ENCODE measurements at regions of chr13 and their contacts with region 1.

Region 1: GRCh38 chr13:39616087-39616694 is 13.2 kb upstream of the LHFPL6 start:
- DNase-seq: peak; percentile 59 to 70
- H3K4me3 ChIP-seq: no peak overlapping the region
- H3K4me3 Mint-ChIP-seq: no peak overlapping the region
- H3K27ac Mint-ChIP-seq: no peak overlapping the region
- H3K4me1 ChIP-seq: no peaks in the 10 kb centered on the region
- H3K4me1 Mint-ChIP-seq: no peaks in the 10 kb centered on the region
- H3K27me3 ChIP-seq: no peaks in the 10 kb centered on the region
- H3K27me3 Mint-ChIP-seq: peaks cover 3% of the 10 kb centered on the region
- CTCF ChIP-seq: peak; percentile 94

Region 2: GRCh38 chr13:39051157-39051556 is 565.0 kb before region 1 on chr13:
- CTCF ChIA-PET with region 1: interaction called, 6 read pairs
- POLR2A ChIA-PET with region 1: no interaction called
- intact Hi-C with region 1: loop called (anchors 5 kb)
- DNase-seq: no peak
- H3K4me3 ChIP-seq: no peak overlapping the region
- H3K4me3 Mint-ChIP-seq: no peak overlapping the region
- H3K27ac Mint-ChIP-seq: no peak overlapping the region
- H3K4me1 ChIP-seq: no peaks in the 10 kb centered on the region
- H3K4me1 Mint-ChIP-seq: no peaks in the 10 kb centered on the region
- H3K27me3 ChIP-seq: no peaks in the 10 kb centered on the region
- H3K27me3 Mint-ChIP-seq: no peaks in the 10 kb centered on the region
- CTCF ChIP-seq: peak; percentile 30 to 42

Region 3: GRCh38 chr13:39273953-39274738 is 342.0 kb before region 1 on chr13:
- CTCF ChIA-PET with region 1: interaction called, 10 read pairs
- POLR2A ChIA-PET with region 1: no interaction called
- intact Hi-C with region 1: loop called (anchors 1 kb)
- DNase-seq: peak in 1 of 2 experiments; percentile 24
- H3K4me3 ChIP-seq: no peak overlapping the region
- H3K4me3 Mint-ChIP-seq: no peak overlapping the region
- H3K27ac Mint-ChIP-seq: no peak overlapping the region
- H3K4me1 ChIP-seq: no peaks in the 10 kb centered on the region
- H3K4me1 Mint-ChIP-seq: no peaks in the 10 kb centered on the region
- H3K27me3 ChIP-seq: no peaks in the 10 kb centered on the region
- H3K27me3 Mint-ChIP-seq: peaks cover 11% of the 10 kb centered on the region
- CTCF ChIP-seq: peak; percentile 15 to 21

Region 4: GRCh38 chr13:39602614-39603366 is 13.4 kb before region 1 on chr13 and contains the start of gene LHFPL6:
- CTCF ChIA-PET with region 1: interaction called, 19 read pairs
- POLR2A ChIA-PET with region 1: no interaction called
- intact Hi-C with region 1: no loop called
- DNase-seq: peak; percentile 72 to 74
- H3K4me3 ChIP-seq: peak within 1 kb of the TSS; percentile 53
- H3K4me3 Mint-ChIP-seq: peak within 1 kb of the TSS; percentile 83
- H3K27ac Mint-ChIP-seq: no peak within 1 kb of the TSS
- H3K4me1 ChIP-seq: 0 out of 2 replicates have a peak, but pooled peaks cover 4% of the 10 kb centered on the region
- H3K4me1 Mint-ChIP-seq: peaks cover 5% of the 10 kb centered on the region
- H3K27me3 ChIP-seq: 0 out of 2 replicates have a peak, but pooled peaks cover 2% of the 10 kb centered on the region
- H3K27me3 Mint-ChIP-seq: peaks cover 23% of the 10 kb centered on the region
- CTCF ChIP-seq: peak in 1 of 2 experiments; percentile 46
- total RNA-seq, gene LHFPL6: 3.6 and 3.9 TPM in 2 replicates

Region 5: DNA sequence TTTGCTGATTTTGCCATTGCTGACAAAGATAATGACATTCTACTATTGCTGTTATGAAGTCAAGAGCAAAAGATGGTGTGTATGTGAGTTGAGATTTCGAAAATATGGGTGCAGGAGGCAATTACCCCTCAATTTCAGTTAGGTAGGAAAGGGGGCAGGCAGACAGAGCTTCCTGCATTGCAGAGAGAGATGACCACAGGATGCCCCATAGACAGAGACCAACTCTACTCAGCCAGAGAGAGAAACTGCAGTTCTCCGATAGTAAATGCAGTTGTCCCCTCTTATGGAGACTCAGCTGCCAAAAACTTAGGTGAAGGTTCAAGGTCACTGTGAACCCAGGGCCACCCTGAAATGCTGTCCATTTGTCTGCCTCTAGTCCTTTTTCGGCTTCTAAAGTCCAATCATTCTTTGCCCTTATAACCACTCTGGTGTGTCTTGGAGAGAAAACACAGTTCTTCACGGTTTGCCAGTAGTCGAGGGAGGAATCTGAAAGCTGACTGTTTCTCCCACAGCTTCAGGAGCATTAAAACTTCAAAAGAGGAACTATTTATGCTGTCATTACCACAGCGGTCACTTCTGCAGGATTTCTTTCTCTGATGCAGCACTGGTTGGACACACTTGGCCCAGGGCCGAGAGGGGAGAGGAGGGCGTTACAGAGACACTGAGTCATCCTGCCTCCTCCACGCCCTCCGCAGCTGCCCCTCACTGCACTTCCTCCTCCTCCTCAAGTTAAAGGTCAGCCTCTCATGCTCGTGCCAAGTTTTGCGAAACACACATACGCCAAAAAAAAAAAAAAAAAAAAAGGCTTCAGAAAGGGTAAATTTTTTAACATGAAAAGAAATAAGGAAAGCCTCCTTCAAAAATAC is 786.0 kb after region 1 on chr13:
- CTCF ChIA-PET with region 1: no interaction called
- POLR2A ChIA-PET with region 1: no interaction called
- intact Hi-C with region 1: no loop called
- DNase-seq: peak; percentile 36 to 76
- H3K4me3 ChIP-seq: no peak overlapping the region
- H3K4me3 Mint-ChIP-seq: no peak overlapping the region
- H3K27ac Mint-ChIP-seq: peak overlapping the region; percentile 8
- H3K4me1 ChIP-seq: peaks cover 33% of the 10 kb centered on the region
- H3K4me1 Mint-ChIP-seq: peaks cover 39% of the 10 kb centered on the region
- H3K27me3 ChIP-seq: no peaks in the 10 kb centered on the region
- H3K27me3 Mint-ChIP-seq: no peaks in the 10 kb centered on the region
- CTCF ChIP-seq: no peak